Activated B cell treated with CpG ODN at 0.5 μM for 24 hours (primary cell): ENCODE measurements at regions of chr1 and their contacts with region 1.

Region 1: GRCh38 chr1:110872745-110873720 is at the start of gene CD53:
- DNase-seq: peak; percentile 27
- ATAC-seq: peak; percentile 64
- H3K4me3 Mint-ChIP-seq: peak within 1 kb of the TSS; percentile 96
- H3K27ac Mint-ChIP-seq: peak within 1 kb of the TSS; percentile 99
- H3K4me1 Mint-ChIP-seq: peaks cover 75% of the 10 kb centered on the region
- H3K27me3 Mint-ChIP-seq: no peaks in the 10 kb centered on the region
- CTCF ChIP-seq: no peak
- total RNA-seq, gene CD53: 491 and 522 TPM in 2 replicates

Region 2: DNA sequence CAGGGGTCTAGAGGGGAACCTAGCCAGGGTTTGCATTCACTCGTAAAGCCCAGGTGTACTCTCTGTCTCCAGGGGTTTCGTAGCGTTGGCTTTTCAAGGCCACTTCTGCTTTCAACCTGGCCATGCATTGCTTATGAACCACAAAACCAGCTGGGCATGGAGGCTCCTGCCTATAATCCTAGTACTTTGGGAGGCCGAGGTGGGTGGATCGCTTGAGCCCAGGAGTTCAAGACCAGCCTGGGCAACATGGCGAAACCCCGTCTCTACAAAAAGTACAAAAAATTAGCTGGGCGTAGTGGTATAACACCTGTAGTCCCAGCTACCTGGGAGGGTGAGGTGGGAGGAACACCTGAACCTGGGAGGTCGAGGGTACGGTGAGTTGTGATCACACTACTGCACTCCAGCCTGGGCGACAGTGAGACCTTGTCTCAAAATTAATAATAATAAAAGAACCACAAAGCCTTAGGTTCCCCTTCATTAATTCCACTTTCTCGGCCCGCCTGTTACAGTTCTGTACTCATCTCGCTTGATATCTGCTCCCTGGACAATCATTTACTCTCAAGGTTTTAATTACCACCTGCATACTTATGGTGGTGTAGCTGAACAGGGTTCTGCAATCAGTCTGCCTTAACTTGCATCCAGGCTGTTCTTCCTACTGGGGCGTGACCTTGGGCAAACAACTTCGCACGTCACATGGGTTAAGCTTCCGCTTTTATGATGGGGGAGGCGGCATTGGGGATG is 488.3 kb before region 1 on chr1:
- CTCF ChIA-PET with region 1: no interaction called
- POLR2A ChIA-PET with region 1: interaction called, 4 read pairs
- intact Hi-C with region 1: loop called (anchors 2 kb)
- DNase-seq: peak; percentile 59
- ATAC-seq: peak; percentile 77
- H3K4me3 Mint-ChIP-seq: peak overlapping the region; percentile 55
- H3K27ac Mint-ChIP-seq: peak overlapping the region; percentile 95
- H3K4me1 Mint-ChIP-seq: peaks cover 95% of the 10 kb centered on the region
- H3K27me3 Mint-ChIP-seq: no peaks in the 10 kb centered on the region
- CTCF ChIP-seq: no peak

Region 3: GRCh38 chr1:110787328-110788071 is 85.5 kb before region 1 on chr1:
- CTCF ChIA-PET with region 1: interaction called, 44 read pairs
- POLR2A ChIA-PET with region 1: interaction called, 98 read pairs
- intact Hi-C with region 1: loop called (anchors 1 kb)
- DNase-seq: peak; percentile 49
- ATAC-seq: peak; percentile 85
- H3K4me3 Mint-ChIP-seq: peak overlapping the region; percentile 70
- H3K27ac Mint-ChIP-seq: peak overlapping the region; percentile 95
- H3K4me1 Mint-ChIP-seq: peaks cover 70% of the 10 kb centered on the region
- H3K27me3 Mint-ChIP-seq: no peaks in the 10 kb centered on the region
- CTCF ChIP-seq: no peak

Region 4: GRCh38 chr1:110857964-110858948 is 14.8 kb before region 1 on chr1:
- CTCF ChIA-PET with region 1: interaction called, 3 read pairs
- POLR2A ChIA-PET with region 1: interaction called, 36 read pairs
- intact Hi-C with region 1: loop called (anchors 1 kb)
- DNase-seq: no peak
- ATAC-seq: peak; percentile 69
- H3K4me3 Mint-ChIP-seq: peak overlapping the region; percentile 49
- H3K27ac Mint-ChIP-seq: peak overlapping the region; percentile 73
- H3K4me1 Mint-ChIP-seq: peaks cover 37% of the 10 kb centered on the region
- H3K27me3 Mint-ChIP-seq: no peaks in the 10 kb centered on the region
- CTCF ChIP-seq: no peak

Region 5: DNA sequence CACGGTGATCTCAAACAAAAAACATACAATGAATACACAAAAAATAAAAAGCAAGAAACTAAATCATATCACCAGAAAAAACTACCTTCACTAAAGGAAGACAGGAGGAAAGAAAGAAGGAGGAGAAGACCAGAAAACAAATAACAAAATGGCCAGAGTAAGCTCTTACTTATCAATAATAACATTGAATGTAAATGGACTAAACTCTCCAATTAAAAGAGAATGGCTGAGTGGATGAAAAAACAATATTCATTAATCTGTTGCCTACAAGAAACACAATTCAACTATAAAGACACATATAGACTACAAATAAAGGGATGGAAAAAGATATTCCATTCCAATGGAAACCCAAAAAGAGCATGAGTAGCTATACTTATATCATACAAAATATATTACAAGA is 63.5 kb after region 1 on chr1:
- CTCF ChIA-PET with region 1: no interaction called
- POLR2A ChIA-PET with region 1: no interaction called
- intact Hi-C with region 1: no loop called
- DNase-seq: no peak
- ATAC-seq: no peak
- H3K4me3 Mint-ChIP-seq: no peak overlapping the region
- H3K27ac Mint-ChIP-seq: no peak overlapping the region
- H3K4me1 Mint-ChIP-seq: no peaks in the 10 kb centered on the region
- H3K27me3 Mint-ChIP-seq: no peaks in the 10 kb centered on the region
- CTCF ChIP-seq: no peak

Region 6: GRCh38 chr1:110963691-110964399 is 90.8 kb after region 1 on chr1 and contains the start of gene LRIF1:
- CTCF ChIA-PET with region 1: interaction called, 3 read pairs
- POLR2A ChIA-PET with region 1: interaction called, 51 read pairs
- intact Hi-C with region 1: loop called (anchors 1 kb)
- DNase-seq: peak; percentile 99
- ATAC-seq: peak; percentile 97
- H3K4me3 Mint-ChIP-seq: peak within 1 kb of the TSS; percentile 84
- H3K27ac Mint-ChIP-seq: peak within 1 kb of the TSS; percentile 91
- H3K4me1 Mint-ChIP-seq: peaks cover 38% of the 10 kb centered on the region
- H3K27me3 Mint-ChIP-seq: peaks cover 10% of the 10 kb centered on the region
- CTCF ChIP-seq: no peak
- total RNA-seq, gene LRIF1: 16.7 and 17.0 TPM in 2 replicates

Region 7: DNA sequence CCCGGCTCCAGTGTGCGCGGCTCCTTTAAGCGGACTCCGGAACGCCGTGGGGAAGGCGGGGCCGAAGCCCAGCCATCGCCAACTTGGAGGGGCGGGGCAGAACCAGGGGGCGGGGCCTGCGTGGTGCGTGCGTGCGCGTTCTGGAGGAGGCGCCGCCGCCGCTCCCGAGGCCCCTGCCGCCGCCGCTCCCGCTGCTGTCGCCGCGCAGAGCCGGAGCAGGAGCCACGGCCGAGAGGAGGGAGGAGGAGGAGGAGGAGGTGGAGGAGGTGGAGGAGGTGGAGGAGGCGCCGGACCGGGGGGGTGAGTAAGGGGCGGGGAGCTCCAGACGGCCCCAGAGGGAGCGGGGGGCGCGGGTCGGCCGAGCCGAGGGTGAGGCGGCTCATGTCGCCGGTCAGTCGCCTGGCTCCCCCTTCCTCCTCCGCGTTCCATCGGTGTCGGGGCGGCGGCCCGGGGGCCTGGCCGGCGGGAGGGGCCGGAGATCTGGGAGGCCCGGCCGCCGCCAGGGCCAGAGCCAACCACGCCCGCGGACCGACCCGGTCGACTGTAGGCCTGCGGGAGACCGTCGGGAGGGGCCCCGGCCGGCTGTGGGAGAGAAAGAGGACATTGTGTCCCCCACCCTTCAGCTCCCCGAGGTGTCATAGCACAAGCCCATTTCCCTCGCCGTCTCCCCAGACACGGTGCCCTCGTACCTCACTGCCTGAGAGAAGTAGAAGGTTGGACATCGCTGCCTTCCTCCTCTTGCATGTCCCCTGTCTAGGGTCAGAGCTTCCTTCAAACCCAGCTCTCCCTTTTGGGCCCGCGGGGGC is 746.8 kb after region 1 on chr1 and contains the start of gene RAP1A:
- CTCF ChIA-PET with region 1: no interaction called
- POLR2A ChIA-PET with region 1: no interaction called
- intact Hi-C with region 1: loop called (anchors 10 kb)
- DNase-seq: peak; percentile 88
- ATAC-seq: peak; percentile 77
- H3K4me3 Mint-ChIP-seq: peak within 1 kb of the TSS; percentile 95
- H3K27ac Mint-ChIP-seq: peak within 1 kb of the TSS; percentile 93
- H3K4me1 Mint-ChIP-seq: peaks cover 82% of the 10 kb centered on the region
- H3K27me3 Mint-ChIP-seq: no peaks in the 10 kb centered on the region
- CTCF ChIP-seq: no peak
- total RNA-seq, gene RAP1A: 92.4 and 93.8 TPM in 2 replicates